ENCODE measurements at regions of chr9 and their contacts with region 1.

Region 1: DNA sequence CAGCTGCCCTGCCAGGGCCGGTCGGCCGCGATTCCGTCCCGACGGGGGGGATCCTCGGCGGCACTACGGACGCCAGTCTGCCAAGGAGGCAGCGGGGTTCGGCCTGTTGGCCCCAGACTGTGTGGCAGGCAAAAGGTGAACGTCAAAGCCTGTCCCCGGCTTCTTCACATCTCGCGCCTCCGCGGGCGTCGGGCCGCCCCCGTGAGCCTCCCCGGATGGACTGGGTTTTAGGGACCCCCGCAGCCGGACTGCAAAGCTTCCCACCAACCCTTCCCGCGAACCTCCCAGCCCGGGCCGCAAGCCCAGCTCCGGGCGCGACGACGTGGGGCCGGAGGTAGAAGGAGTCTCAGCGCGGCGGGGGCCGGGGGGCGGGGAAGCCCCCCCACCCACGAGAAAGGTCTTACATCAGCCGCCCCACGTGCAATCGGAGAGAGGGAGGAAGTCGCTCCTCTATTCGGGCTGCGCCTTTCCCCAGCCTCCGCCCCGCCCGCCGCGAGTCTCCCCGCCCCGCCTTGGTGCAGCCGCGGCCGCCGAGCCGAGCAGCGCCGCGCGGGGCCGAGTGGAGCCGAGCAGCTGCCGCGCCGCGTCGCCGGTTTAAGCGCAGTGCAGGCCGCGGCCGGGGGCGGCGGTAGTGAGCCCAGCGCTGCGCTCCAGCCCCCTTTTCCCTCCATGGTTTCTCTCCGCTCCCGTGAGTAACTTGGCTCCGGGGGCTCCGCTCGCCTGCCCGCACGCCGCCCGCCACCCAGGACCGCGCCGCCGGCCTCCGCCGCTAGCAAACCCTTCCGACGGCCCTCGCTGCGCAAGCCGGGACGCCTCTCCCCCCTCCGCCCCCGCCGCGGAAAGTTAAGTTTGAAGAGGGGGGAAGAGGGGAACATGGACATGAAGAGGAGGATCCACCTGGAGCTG is at the start of gene ANP32B:
- DNase-seq: peak; percentile 96
- ATAC-seq: peak; percentile 79
- H3K4me3 ChIP-seq: peak within 1 kb of the TSS; percentile 25 to 97 (median 84)
- H3K4me3 Mint-ChIP-seq: peak within 1 kb of the TSS; percentile 92
- H3K27ac ChIP-seq: peak within 1 kb of the TSS; percentile 90 to 93
- H3K27ac Mint-ChIP-seq: peak within 1 kb of the TSS; percentile 98
- H3K4me1 ChIP-seq: peaks cover 28 to 34% of the 10 kb centered on the region in 2 donors
- H3K4me1 Mint-ChIP-seq: peaks cover 29% of the 10 kb centered on the region
- H3K27me3 ChIP-seq: no peaks in the 10 kb centered on the region
- H3K27me3 Mint-ChIP-seq: no peaks in the 10 kb centered on the region
- CTCF ChIP-seq: peak; percentile 96
- total RNA-seq, gene ANP32B: 138 and 150 TPM in 2 replicates

Region 2: GRCh38 chr9:96441798-96442445 is 1541.0 kb before region 1 on chr9:
- CTCF ChIA-PET with region 1: no interaction called
- POLR2A ChIA-PET with region 1: no interaction called
- intact Hi-C with region 1: no loop called
- DNase-seq: no peak
- ATAC-seq: no peak
- H3K4me3 ChIP-seq: no peak overlapping the region
- H3K4me3 Mint-ChIP-seq: no peak overlapping the region
- H3K27ac ChIP-seq: no peak overlapping the region
- H3K27ac Mint-ChIP-seq: no peak overlapping the region
- H3K4me1 ChIP-seq: no peaks in the 10 kb centered on the region
- H3K4me1 Mint-ChIP-seq: no peaks in the 10 kb centered on the region
- H3K27me3 ChIP-seq: no peaks in the 10 kb centered on the region
- H3K27me3 Mint-ChIP-seq: no peaks in the 10 kb centered on the region
- CTCF ChIP-seq: no peak

Region 3: DNA sequence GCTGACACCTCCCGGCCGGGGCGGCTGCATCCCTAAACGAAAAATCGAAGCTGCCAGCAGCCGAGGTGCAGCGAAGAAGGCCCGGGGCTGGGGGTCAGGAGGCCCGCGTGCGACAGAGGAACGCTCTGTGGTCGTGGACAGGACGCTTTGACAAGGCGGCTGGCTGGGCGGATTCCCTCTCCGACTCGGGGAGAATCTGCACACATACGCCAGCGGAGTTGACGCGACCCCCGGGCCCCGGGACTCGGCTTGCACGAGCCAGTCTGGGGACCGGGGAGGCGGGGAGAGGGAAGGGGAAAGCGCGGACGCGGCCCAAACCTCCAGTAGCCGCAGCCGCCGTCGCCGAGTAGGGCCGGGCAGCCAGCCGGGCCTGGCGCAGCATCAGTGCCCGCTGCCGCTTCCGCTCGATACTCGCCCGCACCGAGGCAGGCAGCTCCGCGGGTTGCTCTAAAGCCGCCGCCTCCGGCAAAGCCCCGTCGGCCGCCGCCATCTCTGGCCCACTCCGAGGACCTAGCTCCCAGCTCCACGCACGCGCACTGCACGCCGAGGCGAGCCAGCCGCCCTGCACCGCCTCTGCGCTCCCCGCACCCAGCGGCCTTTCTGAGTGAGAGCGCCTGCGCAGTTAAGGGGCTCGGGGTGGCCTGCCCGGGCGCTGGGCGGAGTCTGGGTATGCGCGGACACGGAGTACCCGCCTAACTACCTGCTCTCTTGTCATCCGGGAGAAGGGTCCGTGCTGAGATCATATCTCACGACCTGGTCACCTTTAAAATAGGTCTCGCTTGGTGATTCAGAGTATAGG is 285.9 kb before region 1 on chr9 and contains the start of gene XPA:
- CTCF ChIA-PET with region 1: no interaction called
- POLR2A ChIA-PET with region 1: interaction called, 4 read pairs
- intact Hi-C with region 1: loop called (anchors 10 kb)
- DNase-seq: peak; percentile 97
- ATAC-seq: peak; percentile 92
- H3K4me3 ChIP-seq: peak within 1 kb of the TSS; percentile 67 to 84 (median 74)
- H3K4me3 Mint-ChIP-seq: peak within 1 kb of the TSS; percentile 91
- H3K27ac ChIP-seq: peak within 1 kb of the TSS; percentile 77 to 82
- H3K27ac Mint-ChIP-seq: peak within 1 kb of the TSS; percentile 94
- H3K4me1 ChIP-seq: peaks cover 30 to 40% of the 10 kb centered on the region in 2 donors
- H3K4me1 Mint-ChIP-seq: peaks cover 59% of the 10 kb centered on the region
- H3K27me3 ChIP-seq: no peaks in the 10 kb centered on the region
- H3K27me3 Mint-ChIP-seq: peaks cover 7% of the 10 kb centered on the region
- CTCF ChIP-seq: no peak
- total RNA-seq, gene XPA: 21.3 and 27.4 TPM in 2 replicates

Region 4: GRCh38 chr9:97873877-97874276 is 109.1 kb before region 1 on chr9:
- CTCF ChIA-PET with region 1: no interaction called
- POLR2A ChIA-PET with region 1: no interaction called
- intact Hi-C with region 1: no loop called
- DNase-seq: no peak
- ATAC-seq: no peak
- H3K4me3 ChIP-seq: no peak overlapping the region
- H3K4me3 Mint-ChIP-seq: no peak overlapping the region
- H3K27ac ChIP-seq: no peak overlapping the region
- H3K27ac Mint-ChIP-seq: no peak overlapping the region
- H3K4me1 ChIP-seq: no peaks in the 10 kb centered on the region
- H3K4me1 Mint-ChIP-seq: no peaks in the 10 kb centered on the region
- H3K27me3 ChIP-seq: peaks cover 0 to 5% (median 0%) of the 10 kb centered on the region in 4 experiments
- H3K27me3 Mint-ChIP-seq: peaks cover 22% of the 10 kb centered on the region
- CTCF ChIP-seq: no peak

Region 5: GRCh38 chr9:98034593-98035546 is 51.9 kb after region 1 on chr9:
- CTCF ChIA-PET with region 1: interaction called, 27 read pairs
- POLR2A ChIA-PET with region 1: interaction called, 10 read pairs
- intact Hi-C with region 1: loop called (anchors 1 kb)
- DNase-seq: peak; percentile 91
- ATAC-seq: peak; percentile 87
- H3K4me3 ChIP-seq: peak overlapping the region in 1 of 5 experiments; percentile 38
- H3K4me3 Mint-ChIP-seq: peak overlapping the region; percentile 53
- H3K27ac ChIP-seq: peak overlapping the region; percentile 1 to 34
- H3K27ac Mint-ChIP-seq: peak overlapping the region; percentile 57
- H3K4me1 ChIP-seq: peaks cover 10 to 25% of the 10 kb centered on the region in 2 donors
- H3K4me1 Mint-ChIP-seq: peaks cover 37% of the 10 kb centered on the region
- H3K27me3 ChIP-seq: no peaks in the 10 kb centered on the region
- H3K27me3 Mint-ChIP-seq: no peaks in the 10 kb centered on the region
- CTCF ChIP-seq: peak; percentile 78

Region 6: GRCh38 chr9:98101868-98102273 is 118.9 kb after region 1 on chr9:
- CTCF ChIA-PET with region 1: no interaction called
- POLR2A ChIA-PET with region 1: no interaction called
- intact Hi-C with region 1: loop called (anchors 5 kb)
- DNase-seq: peak; percentile 91
- ATAC-seq: peak; percentile 98
- H3K4me3 ChIP-seq: peak overlapping the region in 1 of 5 experiments; percentile 38
- H3K4me3 Mint-ChIP-seq: peak overlapping the region; percentile 68
- H3K27ac ChIP-seq: peak overlapping the region; percentile 66 to 74
- H3K27ac Mint-ChIP-seq: peak overlapping the region; percentile 81
- H3K4me1 ChIP-seq: peaks cover 82 to 87% of the 10 kb centered on the region in 2 donors
- H3K4me1 Mint-ChIP-seq: peaks cover 77% of the 10 kb centered on the region
- H3K27me3 ChIP-seq: no peaks in the 10 kb centered on the region
- H3K27me3 Mint-ChIP-seq: no peaks in the 10 kb centered on the region
- CTCF ChIP-seq: no peak

Measured in B cell (primary cell).